ENCODE measurements at regions of chr5 and their contacts with region 1.

Region 1: GRCh38 chr5:181191529-181192394 is 13.2 kb downstream of the TRIM7 start:
- H3K4me3 ChIP-seq: peak overlapping the region; percentile 75
- H3K27ac ChIP-seq: peak overlapping the region; percentile 59; the same call in 1 of the 2 replicates
- H3K4me1 ChIP-seq: no peaks in the 10 kb centered on the region
- CTCF ChIP-seq: no peak; the same call in 1 of the 2 replicates

Region 2: DNA sequence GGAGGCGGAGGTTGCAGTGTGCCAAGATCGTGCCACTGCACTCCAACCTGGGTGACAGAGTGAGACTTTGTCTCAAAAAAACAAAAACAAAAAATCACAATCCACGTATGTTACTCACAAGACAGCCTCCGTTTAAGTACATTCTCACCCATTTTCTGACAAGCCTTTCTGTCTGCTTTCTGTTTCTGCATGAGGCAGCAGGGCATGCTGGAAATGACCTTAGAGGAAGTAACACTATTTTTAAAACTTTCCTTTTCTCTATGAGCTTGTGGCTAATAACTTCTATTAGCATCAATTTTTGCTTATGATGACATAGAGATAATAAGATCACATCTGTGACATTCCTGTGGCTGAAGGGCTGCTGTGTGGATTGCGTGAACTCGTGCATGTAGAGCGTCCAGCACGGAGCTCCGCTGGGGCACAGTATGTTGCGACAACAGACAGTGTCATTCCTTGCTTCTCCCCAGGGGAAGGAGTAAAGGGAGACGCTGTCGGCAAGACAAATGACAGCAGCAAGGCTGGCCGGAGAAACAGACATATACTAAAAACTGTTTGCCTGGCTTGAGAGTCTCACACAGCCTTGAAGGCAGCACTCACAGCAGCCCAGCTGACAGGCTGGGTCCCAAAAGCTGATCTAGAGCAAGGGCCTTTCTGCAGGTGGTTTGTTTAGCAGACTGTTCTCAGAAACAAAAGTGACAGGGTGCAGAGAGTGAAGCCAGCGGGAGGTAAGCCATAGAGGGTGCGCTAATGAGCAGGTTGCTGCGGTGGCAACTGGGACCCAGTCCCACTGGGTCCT is 201.5 kb before region 1 on chr5:
- CTCF ChIA-PET with region 1: no interaction called
- POLR2A ChIA-PET with region 1: no interaction called
- H3K4me3 ChIP-seq: no peak overlapping the region
- H3K27ac ChIP-seq: no peak overlapping the region
- H3K4me1 ChIP-seq: no peaks in the 10 kb centered on the region
- CTCF ChIP-seq: no peak

Region 3: GRCh38 chr5:181028032-181028819 is 163.5 kb before region 1 on chr5:
- CTCF ChIA-PET with region 1: no interaction called
- POLR2A ChIA-PET with region 1: no interaction called
- H3K4me3 ChIP-seq: no peak overlapping the region
- H3K27ac ChIP-seq: no peak overlapping the region
- H3K4me1 ChIP-seq: no peaks in the 10 kb centered on the region
- CTCF ChIP-seq: no peak

Region 4: GRCh38 chr5:181167814-181168488 is 23.8 kb before region 1 on chr5:
- CTCF ChIA-PET with region 1: interaction called, 27 read pairs
- POLR2A ChIA-PET with region 1: interaction called, 9 read pairs
- H3K4me3 ChIP-seq: no peak overlapping the region
- H3K27ac ChIP-seq: no peak overlapping the region
- H3K4me1 ChIP-seq: peaks cover 6% of the 10 kb centered on the region
- CTCF ChIP-seq: peak; percentile 63

Region 5: DNA sequence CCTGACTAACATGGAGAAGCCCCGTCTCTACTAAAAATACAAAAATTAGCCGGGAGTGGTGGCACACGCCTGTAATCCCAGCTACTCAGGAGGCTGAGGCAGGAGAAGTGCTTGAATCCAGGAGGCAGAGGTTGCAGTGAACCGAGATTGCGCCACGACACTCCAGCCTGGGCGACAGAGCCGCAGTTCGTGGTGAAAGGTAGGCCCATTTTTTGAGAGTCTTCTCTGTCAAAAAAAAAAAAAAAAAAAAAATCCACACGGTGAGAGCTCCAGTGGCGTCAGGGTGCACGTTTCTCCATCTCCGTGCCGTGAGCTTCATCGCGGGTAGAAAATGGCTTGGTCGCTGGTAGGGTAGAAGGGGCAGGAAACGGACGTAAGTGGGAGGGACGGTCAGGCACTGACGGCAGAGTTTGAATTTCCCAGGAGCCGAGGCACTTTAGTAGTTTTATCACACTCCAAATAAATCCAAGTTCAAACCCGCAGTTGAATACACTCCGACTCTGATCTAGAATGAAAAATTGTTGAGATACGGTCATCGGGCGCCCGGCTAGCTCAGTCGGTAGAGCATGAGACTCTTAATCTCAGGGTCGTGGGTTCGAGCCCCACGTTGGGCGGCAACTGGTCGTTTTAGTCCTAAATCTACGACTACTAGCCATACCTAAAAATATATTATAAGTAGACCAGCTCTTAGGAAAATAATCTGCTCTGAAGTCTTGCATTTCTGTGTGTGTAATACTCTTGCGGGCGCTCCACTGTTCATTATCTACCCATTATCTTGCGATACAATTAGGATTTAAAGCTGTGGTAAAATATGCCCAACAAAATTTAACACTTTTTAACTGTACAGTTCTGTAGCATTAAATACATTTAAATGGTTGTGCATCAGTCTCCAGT is 15.7 kb after region 1 on chr5:
- CTCF ChIA-PET with region 1: interaction called, 12 read pairs
- POLR2A ChIA-PET with region 1: interaction called, 86 read pairs
- H3K4me3 ChIP-seq: peak overlapping the region; percentile 61
- H3K27ac ChIP-seq: peak overlapping the region; percentile 35
- H3K4me1 ChIP-seq: no peaks in the 10 kb centered on the region
- CTCF ChIP-seq: peak; percentile 16; the same call in 1 of the 2 replicates

Region 6: DNA sequence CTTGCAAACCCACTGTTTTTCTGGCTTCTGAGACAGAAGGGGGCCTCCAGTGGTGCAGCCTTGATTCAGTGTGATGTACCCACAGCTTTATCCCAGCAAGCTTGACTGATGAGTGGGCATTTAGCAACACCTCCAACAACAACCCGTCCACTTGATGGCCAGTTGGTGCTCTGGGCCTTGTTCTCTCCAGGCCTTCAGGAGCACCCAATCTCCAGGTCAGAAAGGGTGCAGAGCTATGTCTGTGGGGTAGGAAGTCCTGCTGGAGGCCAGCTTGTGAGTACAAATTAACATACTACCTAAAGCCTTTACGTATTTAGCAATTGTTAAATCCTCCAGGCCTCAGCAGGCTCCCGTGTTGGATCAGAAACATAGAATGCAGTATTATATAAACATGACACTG is 79.3 kb after region 1 on chr5:
- CTCF ChIA-PET with region 1: no interaction called
- POLR2A ChIA-PET with region 1: no interaction called
- H3K4me3 ChIP-seq: no peak overlapping the region
- H3K27ac ChIP-seq: no peak overlapping the region
- H3K4me1 ChIP-seq: no peaks in the 10 kb centered on the region
- CTCF ChIP-seq: no peak